ENCODE measurements at regions of chr13 and their contacts with region 1.

Region 1: DNA sequence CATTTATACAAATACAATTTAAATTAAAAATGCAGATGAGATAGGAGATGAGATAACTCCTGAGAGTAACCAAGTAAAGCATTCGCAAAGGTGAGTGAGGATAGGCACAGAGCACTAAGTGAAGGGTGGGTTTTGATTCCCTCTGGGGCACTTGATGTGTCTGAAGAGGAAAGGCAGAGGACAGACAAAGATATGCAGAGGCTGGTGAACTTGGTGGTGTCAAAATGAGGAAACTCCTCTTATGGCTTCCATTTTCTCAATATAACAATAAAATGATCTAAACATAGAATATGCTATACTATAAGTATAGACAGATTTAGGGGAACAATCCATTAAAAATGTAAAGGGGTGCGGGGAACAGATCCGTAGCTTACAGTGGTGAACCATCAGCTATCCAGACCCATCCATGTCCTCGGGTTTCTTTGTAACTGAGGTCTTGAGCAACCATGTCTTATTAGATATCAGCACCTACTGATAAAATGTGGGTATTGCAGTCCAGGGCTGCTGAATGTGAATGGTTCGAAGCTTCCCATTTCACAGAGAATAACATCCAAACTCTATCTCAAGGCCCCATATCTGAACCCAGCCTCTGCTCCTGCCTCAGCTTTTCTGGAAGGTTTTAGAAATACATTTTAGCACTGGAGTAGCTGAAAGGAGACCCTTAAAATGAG is 73.9 kb upstream of the SLC10A2 start:
- DNase-seq: no peak
- H3K4me3 ChIP-seq: no peak overlapping the region
- H3K27ac ChIP-seq: no peak overlapping the region
- H3K4me1 ChIP-seq: no peaks in the 10 kb centered on the region
- H3K27me3 ChIP-seq: no peaks in the 10 kb centered on the region
- CTCF ChIP-seq: peak in 5 of 6 experiments; percentile 36 to 69 (median 52)
- POLR2A ChIP-seq: no peak

Region 2: GRCh38 chr13:102928941-102929675 is 211.0 kb before region 1 on chr13:
- intact Hi-C with region 1: loop called (anchors 10 kb)
- DNase-seq: no peak
- H3K4me3 ChIP-seq: no peak overlapping the region
- H3K27ac ChIP-seq: no peak overlapping the region
- H3K4me1 ChIP-seq: no peaks in the 10 kb centered on the region
- H3K27me3 ChIP-seq: no peaks in the 10 kb centered on the region
- CTCF ChIP-seq: no peak
- POLR2A ChIP-seq: no peak